Activated naive CD4-positive, alpha-beta T cell treated with anti-CD3 and anti-CD28 coated beads for 36 hours (primary cell): ENCODE measurements at regions of chr12 and their contacts with region 1.

Region 1: GRCh38 chr12:96047229-96048211 is 12.1 kb upstream of the LTA4H start:
- DNase-seq: peak; percentile 29
- H3K4me3 Mint-ChIP-seq: peak overlapping the region; percentile 54
- H3K27ac Mint-ChIP-seq: peak overlapping the region; percentile 84
- H3K4me1 Mint-ChIP-seq: peaks cover 52% of the 10 kb centered on the region
- H3K27me3 Mint-ChIP-seq: no peaks in the 10 kb centered on the region

Region 2: DNA sequence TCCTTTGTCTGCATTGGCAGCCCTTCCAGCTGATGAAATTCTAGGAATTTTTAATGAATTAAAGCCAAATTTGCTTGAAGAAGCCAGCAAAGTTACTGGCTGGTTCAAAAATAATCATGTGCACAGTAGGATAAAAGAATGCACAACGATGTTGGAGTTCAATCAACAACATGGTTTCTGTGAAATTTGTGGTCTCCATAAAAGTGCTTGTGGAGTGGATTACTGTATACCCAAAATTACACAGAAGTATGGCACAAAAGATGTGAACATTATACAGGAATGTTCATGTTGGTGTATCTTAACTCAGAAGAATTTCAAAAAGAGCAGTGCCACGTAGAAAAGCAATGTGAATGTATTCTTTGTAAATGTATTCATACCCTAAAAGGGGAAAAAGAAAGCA is 678.6 kb before region 1 on chr12:
- CTCF ChIA-PET with region 1: no interaction called
- intact Hi-C with region 1: no loop called
- DNase-seq: no peak
- H3K4me3 Mint-ChIP-seq: no peak overlapping the region
- H3K27ac Mint-ChIP-seq: no peak overlapping the region
- H3K4me1 Mint-ChIP-seq: no peaks in the 10 kb centered on the region
- H3K27me3 Mint-ChIP-seq: no peaks in the 10 kb centered on the region

Region 3: DNA sequence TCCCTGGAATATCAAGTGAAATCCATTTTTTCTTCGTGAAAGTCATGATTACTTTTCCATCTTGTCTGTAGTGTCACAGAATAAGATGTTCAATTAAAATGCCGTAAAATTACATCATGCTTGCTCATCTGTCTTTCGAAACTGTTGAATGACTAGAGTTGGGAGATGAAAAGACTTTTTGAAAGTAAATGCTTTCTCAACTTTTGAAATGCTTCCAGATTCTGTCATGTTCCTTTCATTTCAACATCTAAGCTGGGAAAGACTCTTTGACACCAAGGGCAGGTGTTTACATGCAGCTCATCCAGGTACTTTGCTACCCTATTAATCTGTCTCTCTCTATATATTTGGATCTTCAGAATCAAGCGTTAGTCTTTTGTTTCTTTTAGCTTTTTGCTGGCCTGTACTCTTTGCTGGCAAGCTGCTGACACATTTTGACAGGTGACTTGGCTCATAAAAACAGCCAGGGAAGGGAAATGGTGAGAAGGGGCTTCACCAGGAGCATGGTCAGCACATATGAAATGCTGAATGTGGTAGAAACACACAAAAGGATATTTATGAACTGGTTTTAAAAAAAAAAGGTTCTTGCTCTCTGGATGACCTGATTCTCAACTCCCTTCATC is 650.6 kb before region 1 on chr12:
- CTCF ChIA-PET with region 1: no interaction called
- intact Hi-C with region 1: loop called (anchors 1 kb)
- DNase-seq: peak; percentile 21
- H3K4me3 Mint-ChIP-seq: no peak overlapping the region
- H3K27ac Mint-ChIP-seq: peak overlapping the region; percentile 54
- H3K4me1 Mint-ChIP-seq: peaks cover 22% of the 10 kb centered on the region
- H3K27me3 Mint-ChIP-seq: peaks cover 25% of the 10 kb centered on the region

Region 4: GRCh38 chr12:95796225-95796981 is 251.1 kb before region 1 on chr12:
- CTCF ChIA-PET with region 1: no interaction called
- intact Hi-C with region 1: no loop called
- DNase-seq: no peak
- H3K4me3 Mint-ChIP-seq: no peak overlapping the region
- H3K27ac Mint-ChIP-seq: no peak overlapping the region
- H3K4me1 Mint-ChIP-seq: peaks cover 2% of the 10 kb centered on the region
- H3K27me3 Mint-ChIP-seq: peaks cover 24% of the 10 kb centered on the region

Region 5: DNA sequence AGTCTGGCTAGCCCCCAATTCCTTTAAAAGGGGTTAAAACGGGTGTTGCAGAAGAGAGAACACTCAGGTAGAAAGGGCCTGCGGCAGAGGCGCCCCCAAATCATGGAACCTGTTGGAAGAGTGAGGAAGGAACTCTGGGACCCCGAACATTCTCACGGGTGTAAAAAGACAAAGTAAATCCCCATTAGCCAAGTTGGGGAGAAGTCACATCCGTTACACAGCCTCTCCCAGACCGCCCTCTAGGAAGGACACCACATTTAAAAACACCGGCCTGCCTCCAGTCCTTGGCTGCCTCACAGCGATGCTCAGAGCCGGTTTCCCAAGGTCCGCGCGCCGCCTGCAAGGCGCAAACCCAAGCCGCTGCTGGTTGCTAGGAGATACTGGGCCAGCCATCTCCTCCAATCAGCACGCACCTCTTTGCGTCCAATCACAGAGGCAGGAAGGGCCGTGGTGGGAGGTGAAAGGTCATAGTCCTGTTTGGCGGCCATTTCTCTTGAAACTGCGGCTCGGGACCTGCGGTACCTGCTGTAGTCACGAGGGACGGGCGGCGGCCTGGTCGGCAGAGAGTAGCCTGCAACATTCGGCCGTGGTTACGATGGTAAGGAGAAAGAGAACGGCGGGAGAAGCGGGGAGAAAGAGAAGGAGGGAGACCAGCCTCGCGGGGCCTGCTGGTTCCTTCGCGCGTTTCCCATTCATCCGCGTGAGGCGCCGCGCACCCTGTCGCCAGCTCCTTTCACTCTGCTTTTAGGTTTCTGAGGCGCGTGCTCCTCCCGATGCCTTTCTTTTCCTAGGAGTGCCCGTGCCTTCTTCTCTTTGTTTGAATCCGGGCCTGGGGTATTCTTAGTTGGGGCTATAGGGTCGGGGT is 188.8 kb before region 1 on chr12 and contains the start of gene SNRPF:
- CTCF ChIA-PET with region 1: no interaction called
- intact Hi-C with region 1: no loop called
- DNase-seq: peak; percentile 97
- H3K4me3 Mint-ChIP-seq: no peak within 1 kb of the TSS
- H3K27ac Mint-ChIP-seq: no peak within 1 kb of the TSS
- H3K4me1 Mint-ChIP-seq: peaks cover 25% of the 10 kb centered on the region
- H3K27me3 Mint-ChIP-seq: peaks cover 3% of the 10 kb centered on the region
- total RNA-seq, gene SNRPF: 57.4 to 59.9 TPM

Region 6: DNA sequence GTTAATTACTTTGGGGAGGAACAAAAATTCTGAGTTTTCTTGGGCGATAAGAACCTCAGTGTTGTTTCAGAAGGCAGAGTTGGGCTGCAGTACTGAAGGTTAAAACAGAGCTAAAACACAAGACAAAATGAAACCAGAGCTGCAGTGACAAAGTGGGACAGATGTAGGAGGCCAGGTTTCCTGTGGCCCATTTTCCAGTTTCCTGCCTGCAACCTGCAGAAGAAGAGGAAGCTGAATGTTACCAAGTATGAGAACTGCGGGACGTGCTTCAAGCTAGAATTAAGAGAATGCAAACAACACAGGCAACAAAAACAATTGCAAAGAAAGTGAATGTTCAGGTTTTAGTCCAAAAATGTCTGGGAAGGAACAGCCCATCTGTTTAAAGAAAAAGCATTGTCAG is 164.5 kb after region 1 on chr12:
- CTCF ChIA-PET with region 1: interaction called, 3 read pairs
- intact Hi-C with region 1: loop called (anchors 1 kb)
- DNase-seq: peak; percentile 33
- H3K4me3 Mint-ChIP-seq: peak overlapping the region; percentile 61
- H3K27ac Mint-ChIP-seq: peak overlapping the region; percentile 84
- H3K4me1 Mint-ChIP-seq: peaks cover 85% of the 10 kb centered on the region
- H3K27me3 Mint-ChIP-seq: no peaks in the 10 kb centered on the region

Region 7: GRCh38 chr12:96427269-96427729 is 379.8 kb after region 1 on chr12:
- CTCF ChIA-PET with region 1: no interaction called
- intact Hi-C with region 1: loop called (anchors 1 kb)
- DNase-seq: peak; percentile 81
- H3K4me3 Mint-ChIP-seq: no peak overlapping the region
- H3K27ac Mint-ChIP-seq: peak overlapping the region; percentile 74
- H3K4me1 Mint-ChIP-seq: peaks cover 42% of the 10 kb centered on the region
- H3K27me3 Mint-ChIP-seq: no peaks in the 10 kb centered on the region

Region 8: DNA sequence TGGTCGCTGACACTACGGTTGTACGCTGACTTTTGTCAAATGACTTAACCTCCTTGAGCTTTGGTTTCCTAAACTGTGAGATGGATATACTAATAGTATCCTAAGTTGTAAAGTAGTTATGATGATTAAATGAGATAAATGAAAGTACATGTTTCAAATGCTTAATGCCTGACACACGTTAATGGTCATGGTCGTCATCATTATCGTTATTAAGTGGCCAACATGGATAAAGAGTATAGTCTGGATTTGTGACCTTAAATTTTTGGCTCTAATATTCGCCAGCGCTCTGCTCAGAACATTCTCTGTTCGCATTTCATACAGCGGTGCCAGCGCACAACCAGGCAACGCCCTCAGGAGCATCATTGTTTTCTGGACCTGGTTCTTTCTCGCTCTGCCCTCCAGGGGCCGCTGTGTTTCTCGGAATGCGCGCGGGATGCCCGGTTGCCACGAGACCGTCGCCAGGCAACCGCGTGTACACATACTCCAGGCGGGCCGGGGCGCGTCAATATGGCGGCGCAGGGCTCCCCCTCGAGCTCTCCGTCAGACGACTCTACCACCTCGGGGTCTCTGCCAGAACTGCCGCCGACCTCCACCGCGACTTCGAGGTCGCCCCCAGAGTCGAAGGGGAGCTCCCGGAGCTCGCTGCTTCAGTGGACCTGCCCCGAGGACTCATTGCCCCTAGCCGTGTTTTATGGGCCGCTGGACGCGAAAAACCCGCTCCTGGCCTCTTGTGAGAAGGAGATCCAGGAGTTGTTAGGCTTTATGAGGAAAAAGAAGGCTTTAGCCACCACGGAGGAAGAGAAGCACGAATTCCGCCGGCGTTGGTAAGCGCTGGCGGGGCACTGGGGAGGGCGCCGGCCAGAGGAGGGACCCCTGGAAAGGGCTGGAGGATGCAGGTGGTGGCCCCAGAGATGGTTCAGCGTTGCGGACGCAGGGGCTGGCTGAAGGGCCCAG is 441.9 kb after region 1 on chr12 and contains the start of gene CFAP54:
- CTCF ChIA-PET with region 1: interaction called, 3 read pairs
- intact Hi-C with region 1: loop called (anchors 1 kb)
- DNase-seq: peak; percentile 96
- H3K4me3 Mint-ChIP-seq: peak within 1 kb of the TSS; percentile 85
- H3K27ac Mint-ChIP-seq: no peak within 1 kb of the TSS
- H3K4me1 Mint-ChIP-seq: peaks cover 24% of the 10 kb centered on the region
- H3K27me3 Mint-ChIP-seq: no peaks in the 10 kb centered on the region
- total RNA-seq, gene CFAP54: 0.38 to 0.64 TPM

Region 9: GRCh38 chr12:96571101-96571862 is 523.8 kb after region 1 on chr12:
- CTCF ChIA-PET with region 1: no interaction called
- intact Hi-C with region 1: loop called (anchors 1 kb)
- DNase-seq: peak; percentile 58
- H3K4me3 Mint-ChIP-seq: peak overlapping the region; percentile 27
- H3K27ac Mint-ChIP-seq: peak overlapping the region; percentile 15
- H3K4me1 Mint-ChIP-seq: peaks cover 27% of the 10 kb centered on the region
- H3K27me3 Mint-ChIP-seq: peaks cover 7% of the 10 kb centered on the region

Region 10: GRCh38 chr12:97038834-97039233 is 991.3 kb after region 1 on chr12:
- CTCF ChIA-PET with region 1: no interaction called
- intact Hi-C with region 1: no loop called
- DNase-seq: no peak
- H3K4me3 Mint-ChIP-seq: no peak overlapping the region
- H3K27ac Mint-ChIP-seq: no peak overlapping the region
- H3K4me1 Mint-ChIP-seq: no peaks in the 10 kb centered on the region
- H3K27me3 Mint-ChIP-seq: peaks cover 5% of the 10 kb centered on the region